HCT116 (cell line): ENCODE measurements at regions of chr17 and their contacts with region 1.

Region 1: DNA sequence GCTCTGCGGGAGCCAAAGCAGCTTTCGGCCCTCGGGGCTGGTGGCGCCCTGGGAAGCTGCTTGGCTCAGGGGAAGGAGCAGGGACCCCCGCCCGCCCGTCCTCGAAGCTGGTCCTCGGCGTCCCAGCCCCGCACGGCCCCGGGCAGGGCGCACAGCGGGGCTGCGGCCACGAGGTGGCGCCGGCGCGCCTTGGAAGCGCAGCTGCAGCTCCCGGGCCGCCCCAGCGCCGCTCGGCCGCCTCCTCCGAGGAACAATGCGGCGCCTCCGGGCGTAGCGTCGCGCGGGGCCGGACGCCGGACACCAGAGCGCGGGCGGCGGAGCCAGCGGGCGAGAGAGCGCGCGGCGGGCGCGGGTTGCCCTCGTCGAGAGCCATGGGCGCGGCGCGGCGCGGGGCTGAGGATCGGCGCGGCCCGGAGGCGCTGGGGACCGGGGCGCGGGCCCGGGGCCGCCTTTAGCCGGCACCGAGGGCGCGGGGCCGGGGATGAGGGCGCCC is at the start of gene MGAT5B:
- DNase-seq: peak; percentile 56
- ATAC-seq: peak; percentile 81
- H3K4me3 ChIP-seq: peak within 1 kb of the TSS; percentile 29 to 42
- H3K27ac ChIP-seq: peak within 1 kb of the TSS; percentile 26; the same call in 1 of the 2 replicates
- H3K4me1 ChIP-seq: peaks cover 32 to 50% of the 10 kb centered on the region in 2 experiments
- H3K27me3 ChIP-seq: no peaks in the 10 kb centered on the region
- CTCF ChIP-seq: peak; percentile 68 to 81 (median 80)
- POLR2A ChIP-seq: no peak
- RAD21 ChIP-seq: peak; percentile 89
- total RNA-seq, gene MGAT5B: 4.4 TPM

Region 2: GRCh38 chr17:76658001-76658662 is 210.1 kb before region 1 on chr17:
- CTCF ChIA-PET with region 1: no interaction called
- POLR2A ChIA-PET with region 1: no interaction called
- RAD21 ChIA-PET with region 1: no interaction called
- intact Hi-C with region 1: no loop called
- DNase-seq: no peak
- ATAC-seq: no peak
- H3K4me3 ChIP-seq: no peak overlapping the region
- H3K27ac ChIP-seq: no peak overlapping the region
- H3K4me1 ChIP-seq: peaks cover 15 to 20% of the 10 kb centered on the region in 2 experiments
- H3K27me3 ChIP-seq: no peaks in the 10 kb centered on the region
- CTCF ChIP-seq: no peak
- POLR2A ChIP-seq: no peak
- RAD21 ChIP-seq: no peak

Region 3: DNA sequence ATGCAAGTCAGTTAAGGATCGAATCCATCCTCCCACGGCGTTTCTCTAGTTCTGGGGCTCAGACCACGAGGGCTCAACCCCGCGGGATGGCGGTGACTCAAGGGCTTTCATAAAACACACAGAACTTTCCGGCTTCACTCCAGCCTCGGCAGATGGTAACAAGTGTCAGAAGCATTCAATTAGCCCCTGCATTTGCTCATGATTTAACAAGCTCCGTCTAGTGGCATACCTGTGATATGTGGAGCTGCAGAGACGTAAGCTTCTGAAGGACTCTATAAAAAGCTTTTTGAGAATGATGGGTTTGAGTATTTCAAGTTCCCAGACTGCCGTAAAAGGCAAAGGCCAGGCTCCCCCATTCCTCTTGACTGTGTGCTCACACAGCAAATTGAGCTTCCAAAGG is 181.2 kb after region 1 on chr17:
- CTCF ChIA-PET with region 1: interaction called, 10 read pairs
- POLR2A ChIA-PET with region 1: no interaction called
- RAD21 ChIA-PET with region 1: no interaction called
- intact Hi-C with region 1: no loop called
- DNase-seq: peak; percentile 24
- ATAC-seq: peak; percentile 72
- H3K4me3 ChIP-seq: no peak overlapping the region
- H3K27ac ChIP-seq: no peak overlapping the region
- H3K4me1 ChIP-seq: peaks cover 0 to 5% of the 10 kb centered on the region in 2 experiments; a peak in 2 of 4 replicates
- H3K27me3 ChIP-seq: no peaks in the 10 kb centered on the region
- CTCF ChIP-seq: peak; percentile 16 to 35 (median 33); a peak in 5 of 6 replicates
- POLR2A ChIP-seq: no peak
- RAD21 ChIP-seq: peak; percentile 22; the same call in 1 of the 2 replicates